CD4-positive, alpha-beta T cell (primary cell): ENCODE measurements at regions of chr19 and their contacts with region 1.

Region 1: GRCh38 chr19:47745010-47745901 is at the start of gene NOP53:
- DNase-seq: peak; percentile 94 to 99 (median 97)
- ATAC-seq: peak; percentile 80
- H3K4me3 ChIP-seq: peak within 1 kb of the TSS; percentile 59
- H3K4me3 Mint-ChIP-seq: peak within 1 kb of the TSS; percentile 98
- H3K27ac ChIP-seq: peak within 1 kb of the TSS; percentile 93 to 98
- H3K27ac Mint-ChIP-seq: peak within 1 kb of the TSS; percentile 94
- H3K4me1 ChIP-seq: peaks cover 66% of the 10 kb centered on the region
- H3K4me1 Mint-ChIP-seq: peaks cover 39% of the 10 kb centered on the region
- H3K27me3 ChIP-seq: no peaks in the 10 kb centered on the region
- H3K27me3 Mint-ChIP-seq: no peaks in the 10 kb centered on the region
- CTCF ChIP-seq: no peak
- total RNA-seq, gene NOP53: 1,074 to 1,154 TPM

Region 2: GRCh38 chr19:47713046-47714021 is 31.9 kb before region 1 on chr19 and contains the start of gene EHD2:
- CTCF ChIA-PET with region 1: interaction called, 9 read pairs
- POLR2A ChIA-PET with region 1: no interaction called
- intact Hi-C with region 1: loop called in 1 of 2 experiments (anchors 1 kb)
- DNase-seq: peak in 10 of 14 experiments; percentile 9 to 62 (median 27)
- ATAC-seq: peak; percentile 34
- H3K4me3 ChIP-seq: no peak within 1 kb of the TSS
- H3K4me3 Mint-ChIP-seq: no peak within 1 kb of the TSS
- H3K27ac ChIP-seq: no peak within 1 kb of the TSS
- H3K27ac Mint-ChIP-seq: no peak within 1 kb of the TSS
- H3K4me1 ChIP-seq: peaks cover 5% of the 10 kb centered on the region
- H3K4me1 Mint-ChIP-seq: peaks cover 4% of the 10 kb centered on the region
- H3K27me3 ChIP-seq: peaks cover 22 to 24% of the 10 kb centered on the region in 2 experiments
- H3K27me3 Mint-ChIP-seq: peaks cover 49% of the 10 kb centered on the region
- CTCF ChIP-seq: peak; percentile 78
- total RNA-seq, gene EHD2: 0.16 TPM in 1 of 2 experiments, not detected in the other

Region 3: GRCh38 chr19:47778089-47778953 is 33.1 kb after region 1 on chr19 and contains the start of gene SELENOW:
- CTCF ChIA-PET with region 1: no interaction called
- POLR2A ChIA-PET with region 1: interaction called, 7 read pairs
- intact Hi-C with region 1: loop called in 1 of 2 experiments (anchors 2 kb)
- DNase-seq: peak; percentile 58 to 87 (median 72)
- ATAC-seq: peak; percentile 91
- H3K4me3 ChIP-seq: peak within 1 kb of the TSS; percentile 88
- H3K4me3 Mint-ChIP-seq: peak within 1 kb of the TSS; percentile 91
- H3K27ac ChIP-seq: peak within 1 kb of the TSS; percentile 77 to 97
- H3K27ac Mint-ChIP-seq: peak within 1 kb of the TSS; percentile 90
- H3K4me1 ChIP-seq: peaks cover 34% of the 10 kb centered on the region
- H3K4me1 Mint-ChIP-seq: peaks cover 29% of the 10 kb centered on the region
- H3K27me3 ChIP-seq: no peaks in the 10 kb centered on the region
- H3K27me3 Mint-ChIP-seq: no peaks in the 10 kb centered on the region
- CTCF ChIP-seq: no peak
- total RNA-seq, gene SELENOW: 71.6 TPM

Region 4: DNA sequence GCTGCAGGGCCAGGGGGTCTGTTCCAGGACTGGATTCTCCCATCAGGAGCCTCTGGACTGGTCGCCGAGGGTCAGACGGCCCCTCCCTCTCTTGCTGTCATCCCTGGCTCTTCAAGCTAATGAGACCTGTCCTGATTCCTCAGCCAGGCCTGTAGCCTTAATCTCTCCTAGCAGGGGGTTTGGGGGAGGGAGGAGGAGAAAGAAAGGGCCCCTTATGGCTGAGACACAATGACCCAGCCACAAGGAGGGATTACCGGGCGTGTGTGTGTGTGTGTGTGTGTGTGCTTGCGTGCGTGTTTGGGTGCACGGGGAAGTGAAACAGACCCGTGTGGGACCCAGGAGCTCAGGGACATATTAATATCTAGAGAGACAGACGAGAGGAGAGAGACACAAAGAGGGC is 74.6 kb after region 1 on chr19:
- CTCF ChIA-PET with region 1: no interaction called
- POLR2A ChIA-PET with region 1: no interaction called
- intact Hi-C with region 1: no loop called
- DNase-seq: no peak
- ATAC-seq: no peak
- H3K4me3 ChIP-seq: no peak overlapping the region
- H3K4me3 Mint-ChIP-seq: no peak overlapping the region
- H3K27ac ChIP-seq: no peak overlapping the region
- H3K27ac Mint-ChIP-seq: no peak overlapping the region
- H3K4me1 ChIP-seq: no peaks in the 10 kb centered on the region
- H3K4me1 Mint-ChIP-seq: no peaks in the 10 kb centered on the region
- H3K27me3 ChIP-seq: peaks cover 10 to 24% of the 10 kb centered on the region in 2 experiments
- H3K27me3 Mint-ChIP-seq: peaks cover 53% of the 10 kb centered on the region
- CTCF ChIP-seq: no peak